H1 (cell line): ENCODE measurements at regions of chr12 and their contacts with region 1.

Region 1: DNA sequence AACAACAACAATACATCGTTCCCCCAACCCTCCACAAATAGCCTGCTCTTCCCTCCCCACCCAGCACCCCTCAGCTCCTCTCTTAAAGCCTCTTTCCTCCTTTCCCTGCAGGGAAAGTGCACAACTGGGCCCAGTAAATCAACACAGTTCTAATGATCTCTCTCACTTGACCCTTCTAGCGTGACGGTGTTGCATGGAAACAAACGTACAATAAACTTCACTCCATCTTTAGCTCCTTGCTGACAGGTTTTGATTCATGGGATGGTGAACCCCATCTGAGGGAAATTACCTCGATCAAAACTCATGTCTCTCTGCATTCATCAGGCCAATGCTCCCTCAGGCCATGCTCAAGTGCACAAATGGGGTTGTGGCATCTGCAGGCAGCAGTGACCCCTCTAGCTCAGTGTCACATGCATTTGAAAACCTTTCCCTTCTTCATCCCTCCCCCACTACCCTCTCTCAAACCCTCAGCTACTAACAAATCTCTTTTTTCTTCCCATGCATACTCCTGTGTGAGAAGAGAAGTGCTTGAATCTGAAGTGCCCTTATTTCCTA is 22.9 kb downstream of the GDF11 start:
- DNase-seq: no peak
- H3K4me3 ChIP-seq: no peak overlapping the region
- H3K27ac ChIP-seq: no peak overlapping the region
- H3K4me1 ChIP-seq: no peaks in the 10 kb centered on the region
- H3K27me3 ChIP-seq: no peaks in the 10 kb centered on the region
- CTCF ChIP-seq: no peak
- EP300 ChIP-seq: no peak
- POLR2A ChIP-seq: no peak; a peak in 1 of 3 replicates
- RAD21 ChIP-seq: no peak

Region 2: DNA sequence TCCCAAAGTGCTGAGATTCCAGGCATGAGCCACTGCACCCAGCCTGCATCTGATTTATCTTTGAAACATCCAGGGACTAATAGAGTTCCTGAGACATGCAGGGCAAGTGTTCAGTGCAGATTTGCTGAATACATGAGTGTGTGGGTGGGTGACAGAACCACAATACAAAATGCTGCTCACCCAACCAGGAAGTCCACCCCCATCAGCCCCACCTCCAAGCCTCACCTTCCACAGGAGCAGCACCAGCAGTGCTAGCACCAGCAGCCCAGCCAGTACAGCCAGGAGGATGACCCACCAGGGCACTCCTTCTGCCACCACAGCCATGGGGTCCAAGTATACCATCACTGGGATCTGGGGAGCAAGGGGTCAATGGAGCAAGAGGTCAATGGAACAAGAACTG is 78.1 kb before region 1 on chr12:
- CTCF ChIA-PET with region 1: no interaction called
- POLR2A ChIA-PET with region 1: no interaction called
- DNase-seq: no peak
- H3K4me3 ChIP-seq: no peak overlapping the region
- H3K27ac ChIP-seq: no peak overlapping the region
- H3K4me1 ChIP-seq: no peaks in the 10 kb centered on the region
- H3K27me3 ChIP-seq: no peaks in the 10 kb centered on the region
- CTCF ChIP-seq: no peak
- EP300 ChIP-seq: no peak
- POLR2A ChIP-seq: no peak
- RAD21 ChIP-seq: no peak

Region 3: DNA sequence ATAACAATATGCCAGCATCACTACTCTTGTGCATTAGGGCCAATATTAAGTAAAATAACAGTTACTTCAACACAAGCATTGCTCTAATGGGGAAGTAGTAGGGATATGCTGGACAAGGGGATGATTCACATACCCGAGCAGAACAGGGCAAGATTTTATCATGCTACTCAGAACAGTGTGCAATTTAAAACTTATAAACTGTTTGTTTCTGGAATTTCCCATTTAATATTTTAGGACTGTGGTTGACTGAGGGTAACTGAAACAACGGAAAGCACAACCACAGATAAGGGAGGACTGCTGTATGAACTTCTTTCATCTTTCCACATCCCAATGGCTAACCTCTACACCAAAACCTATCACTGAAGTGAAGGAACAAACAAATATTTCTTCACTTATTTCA is 14.9 kb after region 1 on chr12:
- CTCF ChIA-PET with region 1: interaction called, 4 read pairs
- POLR2A ChIA-PET with region 1: interaction called, 23 read pairs
- DNase-seq: no peak
- H3K4me3 ChIP-seq: no peak overlapping the region
- H3K27ac ChIP-seq: no peak overlapping the region
- H3K4me1 ChIP-seq: no peaks in the 10 kb centered on the region
- H3K27me3 ChIP-seq: no peaks in the 10 kb centered on the region
- CTCF ChIP-seq: no peak
- EP300 ChIP-seq: no peak
- POLR2A ChIP-seq: no peak
- RAD21 ChIP-seq: no peak